ENCODE measurements at regions of chr16 and their contacts with region 1.

Region 1: DNA sequence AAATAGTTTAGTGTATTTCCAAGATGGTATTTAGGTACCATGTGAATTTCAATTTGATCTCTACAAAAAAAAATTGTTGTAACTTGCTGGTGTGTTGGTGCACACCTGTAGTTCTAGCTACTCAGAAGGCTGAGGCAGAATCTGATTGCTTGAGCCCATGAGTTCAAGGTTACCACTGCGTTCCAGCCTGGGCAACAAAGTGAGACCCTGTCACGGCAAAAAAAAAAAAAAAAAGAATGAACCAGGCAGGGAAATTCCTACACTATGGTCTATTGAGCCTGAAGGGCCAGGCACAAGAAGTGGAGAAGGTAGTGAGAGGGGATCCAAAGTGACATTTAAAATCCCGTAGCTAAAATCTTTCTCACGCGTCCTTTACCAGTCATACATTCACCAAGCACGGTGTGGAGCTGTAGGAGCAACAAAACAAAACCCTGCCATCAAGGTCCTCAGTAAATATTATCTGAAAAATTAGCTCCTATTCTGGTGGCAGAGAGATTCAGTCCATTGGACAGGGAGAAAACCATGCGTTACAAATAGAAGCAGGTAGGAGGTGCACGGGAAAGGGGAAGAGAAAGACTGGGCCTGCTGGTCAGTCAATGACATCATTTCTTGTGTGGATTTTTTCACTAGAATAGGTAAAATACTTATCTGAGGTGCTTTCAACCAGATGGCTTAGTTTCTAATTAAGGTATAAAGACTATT is 27.3 kb downstream of the TXNDC11 start:
- DNase-seq: no peak

Region 2: GRCh38 chr16:11396241-11397048 is 319.0 kb before region 1 on chr16:
- intact Hi-C with region 1: loop called (anchors 5 kb)
- DNase-seq: peak; percentile 55 to 93 (median 83)

Measured in head of caudate nucleus (tissue), 42 donors.